Naive thymus-derived CD4-positive, alpha-beta T cell (primary cell): ENCODE measurements at regions of chr7 and their contacts with region 1.

Region 1: DNA sequence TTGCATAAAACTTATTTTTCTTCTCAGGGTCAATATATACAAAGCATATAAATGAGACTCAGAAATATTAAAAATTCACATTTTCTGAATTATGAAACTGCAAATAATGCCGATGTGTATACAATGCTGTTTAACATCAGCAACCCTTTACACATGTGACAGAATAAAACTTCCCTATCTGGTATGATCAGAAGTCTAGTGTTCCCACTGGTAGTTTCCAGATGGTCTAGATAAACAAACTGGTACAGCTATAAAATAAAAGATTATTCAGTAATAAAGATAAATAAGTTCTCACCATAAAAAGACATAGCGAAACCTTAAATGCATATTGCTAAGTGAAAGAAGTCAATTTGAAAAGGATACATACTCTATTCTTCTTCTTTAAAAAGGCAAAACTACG is 7.9 kb downstream of the POLR1F start:
- DNase-seq: no peak
- ATAC-seq: no peak
- H3K4me3 ChIP-seq: no peak overlapping the region
- H3K4me3 Mint-ChIP-seq: no peak overlapping the region
- H3K27ac ChIP-seq: no peak overlapping the region
- H3K27ac Mint-ChIP-seq: peak overlapping the region in 1 of 9 donors; percentile 22
- H3K4me1 ChIP-seq: no peaks in the 10 kb centered on the region
- H3K4me1 Mint-ChIP-seq: peaks cover 4 to 33% (median 17%) of the 10 kb centered on the region in 7 donors
- H3K27me3 ChIP-seq: no peaks in the 10 kb centered on the region
- H3K27me3 Mint-ChIP-seq: no peaks in the 10 kb centered on the region

Region 2: DNA sequence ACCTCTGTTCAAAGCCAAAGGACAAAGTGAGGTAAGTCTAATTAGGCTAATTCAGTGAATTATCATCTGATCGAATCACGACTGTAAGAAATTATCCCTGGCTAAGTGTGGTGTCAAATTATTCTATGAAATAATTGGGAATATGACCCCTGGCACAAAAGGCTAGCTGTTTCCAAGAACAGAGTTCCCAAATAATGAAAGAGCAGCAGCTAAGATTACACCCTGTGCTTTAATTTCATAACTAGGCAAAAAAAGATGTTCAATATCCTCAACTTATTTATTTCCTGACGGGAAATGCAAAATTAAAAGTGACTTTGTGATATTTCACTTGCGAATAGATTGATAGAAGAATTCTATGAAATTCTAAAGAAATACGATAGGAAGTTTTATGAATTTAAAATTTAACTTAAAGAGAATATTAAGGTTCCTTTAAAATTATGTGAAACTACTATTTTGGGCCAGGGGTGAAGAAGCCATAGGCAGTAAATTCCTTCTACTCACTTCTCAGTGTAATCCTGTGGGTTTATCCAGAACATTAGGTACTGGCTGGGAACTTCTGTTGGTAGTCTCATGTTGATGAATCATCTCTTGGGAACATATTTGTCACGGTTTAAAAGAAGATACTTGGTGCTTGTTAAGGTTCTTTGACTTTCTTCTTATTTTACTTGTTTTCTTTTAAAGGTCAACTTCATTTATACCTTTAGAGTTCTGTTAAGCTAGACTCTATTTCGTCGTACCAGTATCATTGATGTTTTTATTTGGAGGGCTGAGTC is 140.6 kb before region 1 on chr7:
- CTCF ChIA-PET with region 1: no interaction called
- POLR2A ChIA-PET with region 1: no interaction called
- intact Hi-C with region 1: no loop called
- DNase-seq: no peak
- ATAC-seq: no peak
- H3K4me3 ChIP-seq: no peak overlapping the region
- H3K4me3 Mint-ChIP-seq: no peak overlapping the region
- H3K27ac ChIP-seq: no peak overlapping the region
- H3K27ac Mint-ChIP-seq: no peak overlapping the region
- H3K4me1 ChIP-seq: no peaks in the 10 kb centered on the region
- H3K4me1 Mint-ChIP-seq: no peaks in the 10 kb centered on the region
- H3K27me3 ChIP-seq: no peaks in the 10 kb centered on the region
- H3K27me3 Mint-ChIP-seq: no peaks in the 10 kb centered on the region

Region 3: GRCh38 chr7:19713676-19714075 is 12.7 kb after region 1 on chr7:
- CTCF ChIA-PET with region 1: interaction called, 10 read pairs
- POLR2A ChIA-PET with region 1: interaction called, 5 read pairs
- intact Hi-C with region 1: no loop called
- DNase-seq: peak in 7 of 9 donors; percentile 15 to 59 (median 52)
- ATAC-seq: no peak
- H3K4me3 ChIP-seq: no peak overlapping the region
- H3K4me3 Mint-ChIP-seq: no peak overlapping the region
- H3K27ac ChIP-seq: no peak overlapping the region
- H3K27ac Mint-ChIP-seq: peak overlapping the region in 1 of 9 donors; percentile 65
- H3K4me1 ChIP-seq: peaks cover 7% of the 10 kb centered on the region in 2 donors
- H3K4me1 Mint-ChIP-seq: peaks cover 7 to 25% (median 15%) of the 10 kb centered on the region in 7 donors
- H3K27me3 ChIP-seq: no peaks in the 10 kb centered on the region
- H3K27me3 Mint-ChIP-seq: peaks cover 0 to 21% (median 0%) of the 10 kb centered on the region in 5 donors